ENCODE measurements at regions of chr10 and their contacts with region 1.

Region 1: GRCh38 chr10:96043033-96043932 is at the start of gene CCNJ:
- DNase-seq: peak; percentile 91
- ATAC-seq: peak; percentile 91
- H3K4me3 Mint-ChIP-seq: peak within 1 kb of the TSS; percentile 92
- H3K27ac Mint-ChIP-seq: peak within 1 kb of the TSS; percentile 80
- H3K4me1 Mint-ChIP-seq: peaks cover 27% of the 10 kb centered on the region
- H3K27me3 Mint-ChIP-seq: peaks cover 6% of the 10 kb centered on the region
- total RNA-seq, gene CCNJ: 5.2 to 5.6 TPM

Region 2: GRCh38 chr10:96025566-96025965 is 17.7 kb before region 1 on chr10:
- POLR2A ChIA-PET with region 1: no interaction called
- DNase-seq: no peak
- ATAC-seq: peak; percentile 60
- H3K4me3 Mint-ChIP-seq: no peak overlapping the region
- H3K27ac Mint-ChIP-seq: no peak overlapping the region
- H3K4me1 Mint-ChIP-seq: no peaks in the 10 kb centered on the region
- H3K27me3 Mint-ChIP-seq: no peaks in the 10 kb centered on the region

Region 3: GRCh38 chr10:96089670-96090462 is 46.6 kb after region 1 on chr10:
- POLR2A ChIA-PET with region 1: interaction called, 10 read pairs
- DNase-seq: peak; percentile 94
- ATAC-seq: peak; percentile 93
- H3K4me3 Mint-ChIP-seq: peak overlapping the region; percentile 95
- H3K27ac Mint-ChIP-seq: peak overlapping the region; percentile 99
- H3K4me1 Mint-ChIP-seq: peaks cover 9% of the 10 kb centered on the region
- H3K27me3 Mint-ChIP-seq: peaks cover 18% of the 10 kb centered on the region

Region 4: DNA sequence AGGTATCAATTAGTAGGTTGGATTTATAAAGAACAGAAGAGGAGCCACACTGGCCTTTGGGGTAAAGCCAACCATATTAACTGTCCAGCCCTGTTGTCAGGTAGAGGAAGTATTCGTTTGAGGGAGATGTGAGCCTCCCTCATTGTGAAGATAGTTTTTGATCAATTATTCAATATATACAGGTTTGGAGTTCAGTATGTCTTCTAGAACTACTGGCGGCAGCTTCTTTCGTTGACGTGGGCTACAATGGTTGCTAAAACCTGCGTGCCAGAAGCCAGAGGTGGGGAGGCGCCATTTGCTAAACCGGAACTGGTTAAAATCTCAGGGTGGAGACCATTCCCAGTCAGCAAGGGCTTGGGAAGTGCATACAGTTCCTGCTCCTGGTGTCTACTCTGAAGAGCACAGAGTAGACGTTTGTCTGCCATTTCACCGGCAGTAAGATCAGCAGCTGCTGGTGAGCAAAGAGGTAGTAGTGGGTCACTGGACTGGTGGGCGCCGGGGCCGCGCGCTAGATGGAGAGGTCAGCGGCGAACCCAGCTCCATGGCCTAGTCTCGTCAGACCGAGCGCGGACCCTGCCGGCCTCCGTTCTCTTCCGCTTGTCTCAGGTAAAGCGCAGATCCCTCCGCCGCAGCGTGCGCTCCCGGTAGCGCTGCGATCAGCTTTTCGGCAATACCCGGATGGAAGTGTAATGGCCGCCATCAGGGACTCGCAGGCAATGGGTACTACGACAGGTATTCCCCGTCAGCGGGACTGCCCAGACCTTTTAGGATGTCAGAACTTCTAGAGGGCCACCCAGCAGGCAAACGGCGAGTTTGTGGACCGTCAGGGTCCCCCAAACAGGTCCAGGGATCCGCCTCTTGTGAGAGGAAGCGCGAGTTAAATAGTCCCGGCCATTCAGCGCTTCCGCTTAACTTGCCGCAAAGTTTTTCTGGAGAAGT is 86.4 kb after region 1 on chr10 and contains the start of gene ZNF518A:
- POLR2A ChIA-PET with region 1: interaction called, 16 read pairs
- DNase-seq: peak; percentile 90
- ATAC-seq: peak; percentile 86
- H3K4me3 Mint-ChIP-seq: peak within 1 kb of the TSS; percentile 96
- H3K27ac Mint-ChIP-seq: peak within 1 kb of the TSS; percentile 98
- H3K4me1 Mint-ChIP-seq: peaks cover 22% of the 10 kb centered on the region
- H3K27me3 Mint-ChIP-seq: peaks cover 34% of the 10 kb centered on the region
- total RNA-seq, gene ZNF518A: 22.0 to 22.7 TPM